Transverse colon (tissue), 4 donors: ENCODE measurements at regions of chr18 and their contacts with region 1.

Region 1: DNA sequence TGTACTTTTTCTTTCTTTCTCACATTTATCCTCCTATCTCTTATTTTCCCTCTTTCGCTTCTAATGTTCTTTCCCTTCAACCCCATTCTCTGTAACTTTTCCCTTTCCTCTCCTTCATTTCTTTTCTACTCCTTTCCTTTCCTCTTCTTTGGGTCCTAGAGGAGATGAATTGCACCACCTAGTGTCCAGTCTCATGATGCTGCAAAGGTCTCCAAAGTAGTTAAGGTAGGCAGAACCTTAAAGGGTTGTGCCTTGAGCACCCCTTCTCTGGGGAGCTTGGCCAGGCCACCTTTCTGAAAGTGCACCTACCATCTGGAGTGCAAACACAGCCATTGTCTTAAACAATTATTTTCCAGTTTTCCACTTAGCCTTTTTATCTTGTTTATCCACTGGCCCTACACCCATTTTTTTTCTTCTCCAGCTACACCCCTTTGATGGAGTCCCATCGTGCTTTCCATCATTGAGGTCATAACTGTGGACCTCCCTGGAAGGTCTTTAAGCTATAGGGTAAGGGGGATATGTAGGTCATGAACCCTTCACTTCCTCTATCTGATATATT is 156.0 kb downstream of the ESCO1 start:
- DNase-seq: peak; percentile 11
- H3K4me3 ChIP-seq: no peak overlapping the region
- H3K27ac ChIP-seq: no peak overlapping the region
- H3K4me1 ChIP-seq: no peaks in the 10 kb centered on the region
- H3K27me3 ChIP-seq: no peaks in the 10 kb centered on the region
- CTCF ChIP-seq: peak; percentile 49 to 59 (median 55)
- EP300 ChIP-seq: no peak
- POLR2A ChIP-seq: no peak

Region 2: GRCh38 chr18:21191596-21192307 is 252.8 kb before region 1 on chr18:
- in situ Hi-C with region 1: loop called in 2 of 4 experiments (anchors 5 to 10 kb)
- intact Hi-C with region 1: loop called (anchors 5 kb)
- DNase-seq: peak; percentile 39
- H3K4me3 ChIP-seq: no peak overlapping the region
- H3K27ac ChIP-seq: no peak overlapping the region
- H3K4me1 ChIP-seq: no peaks in the 10 kb centered on the region
- H3K27me3 ChIP-seq: peaks cover 9% of the 10 kb centered on the region
- CTCF ChIP-seq: peak in 4 of 5 experiments; percentile 9 to 42 (median 37)
- EP300 ChIP-seq: no peak
- POLR2A ChIP-seq: no peak